Activated T-helper 1 cell treated with anti-CD3 and anti-CD28 coated beads, Interleukin-12 subunit alpha, Interleukin-12 subunit beta, Interleukin-2, Interleukin-4 antibody, amounts not matched to agents 30 ng/mL and 10 ng/mL and 1 ng/mL, durations not matched to agents 14 hours and 24 hours and 36 hours (primary cell): ENCODE measurements at regions of chr4 and their contacts with region 1.

Region 1: DNA sequence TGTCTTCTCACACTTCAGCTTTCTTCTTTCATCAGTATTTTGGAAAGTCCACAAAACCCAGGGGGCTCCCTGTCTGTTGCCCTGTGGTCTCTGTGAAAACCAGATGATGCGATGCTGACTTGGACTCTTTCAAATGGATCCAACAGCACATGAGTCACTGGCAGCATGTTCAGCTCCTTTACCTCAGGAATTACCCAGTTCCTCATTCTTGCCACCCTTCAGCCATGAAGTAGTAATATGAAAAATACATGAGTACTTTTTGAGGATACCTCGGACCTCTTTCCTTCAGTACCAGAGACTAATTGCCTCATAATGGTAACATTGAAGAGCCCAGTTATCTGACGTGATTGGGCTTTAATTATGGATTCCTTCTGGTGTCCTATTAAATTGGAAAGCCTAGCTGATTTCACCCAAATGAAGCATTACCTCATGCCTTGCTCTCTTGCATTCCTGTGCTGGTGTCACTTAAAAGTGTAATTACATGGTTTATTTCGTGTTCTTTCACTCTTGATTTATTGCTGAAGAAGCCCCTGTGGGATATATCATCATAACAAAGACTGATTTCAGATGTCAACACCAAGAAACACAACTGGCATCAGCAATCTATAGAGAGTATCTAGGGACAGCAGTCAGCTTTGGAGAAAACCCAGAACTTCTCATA is 63.4 kb downstream of the NFKB1 start:
- DNase-seq: no peak
- H3K4me3 Mint-ChIP-seq: no peak overlapping the region
- H3K27ac Mint-ChIP-seq: peak overlapping the region; percentile 69
- H3K4me1 Mint-ChIP-seq: peaks cover 79% of the 10 kb centered on the region
- H3K27me3 Mint-ChIP-seq: no peaks in the 10 kb centered on the region

Region 2: DNA sequence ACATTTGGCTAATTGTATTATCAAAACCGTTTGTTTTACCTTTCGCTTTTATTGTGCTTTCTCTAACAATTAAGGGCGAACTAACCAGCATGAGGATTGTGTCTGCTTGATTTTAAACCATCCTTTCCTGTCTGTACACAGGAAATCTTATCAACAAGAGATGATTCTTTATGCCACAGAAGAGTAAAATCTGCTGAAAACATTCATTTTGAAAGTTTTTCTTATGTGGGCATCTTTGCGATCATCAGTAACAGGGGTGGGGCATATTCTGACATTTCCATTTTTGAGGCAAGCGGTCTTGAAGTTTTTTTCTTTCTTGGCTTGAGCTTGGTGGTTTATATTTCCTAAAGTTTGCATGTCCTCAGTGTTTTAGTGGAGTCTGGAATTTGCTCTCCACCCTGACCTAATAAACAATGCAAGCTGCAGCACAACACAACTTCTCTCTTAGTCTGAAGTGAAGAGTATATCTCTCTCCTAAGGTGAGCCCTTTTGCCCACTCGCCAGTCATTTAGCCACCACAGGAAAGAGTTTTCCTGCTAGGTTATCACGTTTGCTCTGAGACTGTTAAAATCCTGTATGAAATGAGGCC is 36.7 kb before region 1 on chr4:
- intact Hi-C with region 1: loop called (anchors 1 kb)
- DNase-seq: no peak
- H3K4me3 Mint-ChIP-seq: peak overlapping the region; percentile 69
- H3K27ac Mint-ChIP-seq: peak overlapping the region; percentile 66
- H3K4me1 Mint-ChIP-seq: peaks cover 77% of the 10 kb centered on the region
- H3K27me3 Mint-ChIP-seq: no peaks in the 10 kb centered on the region

Region 3: GRCh38 chr4:102546635-102547034 is 17.9 kb before region 1 on chr4:
- intact Hi-C with region 1: loop called (anchors 2 kb)
- DNase-seq: no peak
- H3K4me3 Mint-ChIP-seq: no peak overlapping the region
- H3K27ac Mint-ChIP-seq: peak overlapping the region; percentile 42
- H3K4me1 Mint-ChIP-seq: peaks cover 55% of the 10 kb centered on the region
- H3K27me3 Mint-ChIP-seq: no peaks in the 10 kb centered on the region

Region 4: DNA sequence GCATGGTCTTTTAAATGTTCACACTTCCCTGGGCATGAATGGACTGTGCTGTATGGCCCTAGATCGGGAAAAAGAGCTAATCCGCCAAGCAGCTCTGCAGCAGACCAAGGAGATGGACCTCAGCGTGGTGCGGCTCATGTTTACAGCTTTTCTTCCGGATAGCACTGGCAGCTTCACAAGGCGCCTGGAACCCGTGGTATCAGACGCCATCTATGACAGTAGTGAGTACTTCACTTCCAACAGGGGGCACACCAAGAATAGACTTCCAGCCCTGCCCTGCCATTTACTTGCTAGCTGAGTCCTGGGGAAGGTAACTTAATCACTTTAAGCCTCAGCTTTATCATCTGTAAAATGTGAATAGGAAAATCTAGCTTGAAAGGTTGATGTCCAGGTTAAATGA is 14.3 kb after region 1 on chr4:
- intact Hi-C with region 1: loop called (anchors 1 kb)
- DNase-seq: no peak
- H3K4me3 Mint-ChIP-seq: no peak overlapping the region
- H3K27ac Mint-ChIP-seq: peak overlapping the region; percentile 40
- H3K4me1 Mint-ChIP-seq: peaks cover 80% of the 10 kb centered on the region
- H3K27me3 Mint-ChIP-seq: no peaks in the 10 kb centered on the region